Caco-2 (cell line): ENCODE measurements at regions of chr16 and their contacts with region 1.

Region 1: DNA sequence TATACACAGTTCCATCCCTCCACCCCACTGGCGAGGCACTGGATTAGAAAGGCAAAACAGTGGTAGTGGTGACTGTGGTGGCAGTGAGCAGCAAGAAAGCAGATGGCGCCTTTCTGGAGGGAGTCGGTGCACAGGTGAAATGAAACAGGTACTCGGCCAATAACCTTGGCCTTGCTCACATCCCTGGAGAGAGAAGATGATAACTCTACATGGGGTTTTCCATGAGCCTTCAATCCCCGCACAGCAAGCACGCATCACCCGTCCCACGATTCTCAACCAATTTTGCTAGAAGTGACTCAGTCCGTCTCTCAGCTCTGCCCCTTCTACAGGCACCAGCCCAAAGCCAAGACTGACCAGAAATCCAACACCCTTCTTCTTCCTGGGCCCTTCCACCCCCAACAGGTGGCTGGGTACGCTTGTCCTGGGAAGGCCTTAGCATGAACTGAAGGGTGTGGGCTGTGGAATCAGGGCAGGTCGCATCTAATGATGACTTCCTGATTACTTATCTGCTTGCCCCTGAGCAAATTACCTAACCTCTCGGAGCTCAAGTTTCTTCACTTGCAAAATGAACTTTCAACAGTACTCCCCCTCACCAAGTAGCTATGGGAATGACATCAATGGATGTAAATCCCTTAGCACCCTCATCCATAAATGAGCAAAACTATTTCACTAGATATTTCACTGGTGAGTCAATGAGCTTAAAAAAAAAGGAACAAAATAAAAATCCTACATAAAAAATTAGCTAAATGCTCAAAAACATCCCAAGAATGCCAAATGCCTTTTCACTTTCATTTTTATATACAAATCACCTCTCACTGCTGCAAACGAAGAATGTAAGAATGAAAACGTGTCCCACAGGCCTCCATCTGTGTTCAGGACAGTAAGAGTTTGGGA is 18.0 kb downstream of the XPO6 start:
- DNase-seq: peak; percentile 18 to 39
- H3K4me3 ChIP-seq: no peak overlapping the region
- H3K4me3 Mint-ChIP-seq: no peak overlapping the region
- H3K27ac Mint-ChIP-seq: peak overlapping the region; percentile 57
- H3K4me1 ChIP-seq: peaks cover 12% of the 10 kb centered on the region; the same call in 1 of the 2 replicates
- H3K4me1 Mint-ChIP-seq: peaks cover 8% of the 10 kb centered on the region
- H3K27me3 ChIP-seq: no peaks in the 10 kb centered on the region
- H3K27me3 Mint-ChIP-seq: no peaks in the 10 kb centered on the region
- CTCF ChIP-seq: no peak

Region 2: GRCh38 chr16:28149011-28149888 is 44.5 kb before region 1 on chr16:
- CTCF ChIA-PET with region 1: no interaction called
- POLR2A ChIA-PET with region 1: no interaction called
- intact Hi-C with region 1: loop called (anchors 1 kb)
- DNase-seq: no peak
- H3K4me3 ChIP-seq: no peak overlapping the region
- H3K4me3 Mint-ChIP-seq: no peak overlapping the region
- H3K27ac Mint-ChIP-seq: no peak overlapping the region
- H3K4me1 ChIP-seq: no peaks in the 10 kb centered on the region
- H3K4me1 Mint-ChIP-seq: no peaks in the 10 kb centered on the region
- H3K27me3 ChIP-seq: no peaks in the 10 kb centered on the region
- H3K27me3 Mint-ChIP-seq: no peaks in the 10 kb centered on the region
- CTCF ChIP-seq: no peak